Spleen (tissue), 13 donors: ENCODE measurements at regions of chr7 and their contacts with region 1.

Region 1: GRCh38 chr7:54242776-54243175 is 299.4 kb upstream of the VSTM2A start:
- DNase-seq: no peak
- H3K4me3 ChIP-seq: no peak overlapping the region
- H3K27ac ChIP-seq: no peak overlapping the region
- H3K4me1 ChIP-seq: no peaks in the 10 kb centered on the region
- H3K27me3 ChIP-seq: no peaks in the 10 kb centered on the region
- CTCF ChIP-seq: no peak
- POLR2A ChIP-seq: no peak

Region 2: DNA sequence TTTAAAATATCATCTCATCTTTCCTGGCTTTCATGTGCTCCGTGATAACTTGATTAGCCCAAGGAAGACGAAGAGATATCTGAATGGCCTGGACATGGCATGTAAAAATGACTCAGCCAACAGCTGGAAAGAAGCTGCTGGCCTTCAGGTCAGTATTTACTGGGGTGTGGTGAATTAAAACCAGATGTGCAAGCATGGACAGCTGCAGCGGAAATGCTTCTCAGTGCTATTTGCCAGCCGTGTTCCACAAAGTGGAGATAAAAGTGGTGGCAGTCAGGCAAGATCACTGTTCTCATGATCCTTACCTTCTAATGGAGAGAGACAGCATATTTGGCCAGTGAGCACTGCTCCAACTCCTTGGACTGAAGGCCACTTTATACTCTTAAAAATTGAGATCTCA is 96.3 kb after region 1 on chr7:
- intact Hi-C with region 1: loop called (anchors 10 kb)
- DNase-seq: no peak
- H3K4me3 ChIP-seq: no peak overlapping the region
- H3K27ac ChIP-seq: no peak overlapping the region
- H3K4me1 ChIP-seq: no peaks in the 10 kb centered on the region
- H3K27me3 ChIP-seq: no peaks in the 10 kb centered on the region
- CTCF ChIP-seq: no peak
- POLR2A ChIP-seq: no peak

Region 3: DNA sequence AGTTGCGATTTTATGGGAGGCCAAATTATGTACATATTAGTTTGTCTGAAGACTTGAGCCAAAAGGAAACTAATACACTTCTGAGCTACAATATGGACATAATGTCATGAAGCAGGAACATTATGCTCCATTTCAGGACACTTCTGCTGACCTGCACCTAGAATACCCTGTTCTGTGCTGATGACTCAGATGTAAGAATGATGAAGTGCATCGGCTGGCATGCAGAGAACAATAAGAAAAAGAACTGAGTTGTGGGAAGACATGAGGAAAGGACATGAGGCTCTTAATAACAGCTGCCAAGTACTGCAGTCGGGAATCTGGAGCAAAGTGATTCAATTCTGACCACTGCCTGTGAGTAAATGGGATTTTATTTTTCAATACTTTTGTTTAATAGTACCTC is 106.5 kb after region 1 on chr7:
- intact Hi-C with region 1: no loop called
- DNase-seq: no peak
- H3K4me3 ChIP-seq: no peak overlapping the region
- H3K27ac ChIP-seq: no peak overlapping the region
- H3K4me1 ChIP-seq: no peaks in the 10 kb centered on the region
- H3K27me3 ChIP-seq: no peaks in the 10 kb centered on the region
- CTCF ChIP-seq: no peak
- POLR2A ChIP-seq: no peak

Region 4: DNA sequence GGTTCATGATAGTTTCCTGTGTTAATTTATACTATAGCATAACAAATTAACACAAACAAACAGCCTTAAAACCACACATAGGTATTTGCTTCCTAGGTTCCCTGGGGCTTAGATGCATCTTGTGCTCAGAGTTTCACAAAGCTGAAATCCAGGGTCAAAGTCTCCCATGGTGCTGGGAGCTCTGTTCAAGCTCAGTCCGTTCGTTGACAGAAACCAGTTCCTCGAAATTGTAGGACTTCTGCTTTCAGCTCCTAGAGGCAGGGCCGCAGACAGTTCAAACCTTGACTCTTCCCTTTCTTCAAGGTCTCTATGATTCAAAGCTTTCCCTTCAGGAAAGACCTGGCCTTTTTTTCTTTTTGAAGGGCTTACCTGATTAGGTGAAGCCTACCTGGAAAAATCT is 389.9 kb after region 1 on chr7:
- intact Hi-C with region 1: no loop called
- DNase-seq: no peak
- H3K4me3 ChIP-seq: no peak overlapping the region
- H3K27ac ChIP-seq: no peak overlapping the region
- H3K4me1 ChIP-seq: no peaks in the 10 kb centered on the region
- H3K27me3 ChIP-seq: no peaks in the 10 kb centered on the region
- CTCF ChIP-seq: no peak
- POLR2A ChIP-seq: no peak